Naive thymus-derived CD4-positive, alpha-beta T cell (primary cell): ENCODE measurements at regions of chr14 and their contacts with region 1.

Region 1: DNA sequence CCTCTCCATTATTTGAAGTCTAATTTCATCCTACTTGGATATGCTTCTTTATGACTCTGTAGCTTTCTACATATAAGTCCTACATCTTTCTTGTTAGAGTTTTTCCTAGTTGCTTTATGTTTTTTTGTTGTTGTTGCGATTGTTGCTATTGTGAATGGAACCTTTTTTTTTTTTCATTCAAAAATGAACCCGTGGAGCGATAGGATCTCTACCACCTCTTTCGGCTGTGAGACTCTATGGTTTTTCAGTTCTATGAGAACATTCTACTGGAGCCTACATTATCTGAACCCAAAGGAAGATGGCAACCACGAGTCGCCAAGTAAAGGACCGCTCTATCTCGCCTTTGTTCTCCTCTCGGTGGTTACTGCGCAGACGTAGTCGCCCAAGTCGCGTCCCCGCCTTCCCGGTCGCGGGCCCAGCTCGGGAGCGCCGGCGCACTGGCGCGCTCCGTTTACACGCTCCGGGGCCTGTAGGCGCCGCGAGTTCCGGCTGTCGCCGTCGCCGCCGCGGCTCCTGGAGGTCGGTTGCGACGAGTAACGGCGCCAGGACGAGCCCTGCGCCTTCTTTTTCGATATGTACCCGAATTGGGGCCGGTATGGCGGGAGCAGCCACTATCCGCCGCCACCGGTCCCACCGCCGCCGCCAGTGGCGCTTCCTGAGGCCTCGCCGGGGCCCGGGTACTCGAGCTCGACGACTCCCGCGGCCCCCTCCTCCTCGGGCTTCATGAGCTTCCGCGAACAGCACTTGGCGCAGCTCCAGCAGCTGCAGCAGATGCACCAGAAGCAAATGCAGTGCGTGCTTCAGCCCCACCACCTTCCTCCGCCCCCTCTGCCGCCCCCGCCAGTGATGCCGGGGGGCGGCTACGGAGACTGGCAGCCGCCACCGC is at the start of gene YLPM1:
- DNase-seq: peak; percentile 79 to 97 (median 95)
- ATAC-seq: peak; percentile 98
- H3K4me3 ChIP-seq: peak within 1 kb of the TSS; percentile 58
- H3K4me3 Mint-ChIP-seq: peak within 1 kb of the TSS; percentile 86 to 99 (median 95)
- H3K27ac ChIP-seq: peak within 1 kb of the TSS; percentile 93
- H3K27ac Mint-ChIP-seq: peak within 1 kb of the TSS; percentile 87 to 97 (median 95)
- H3K4me1 ChIP-seq: peaks cover 31 to 38% of the 10 kb centered on the region in 2 donors
- H3K4me1 Mint-ChIP-seq: peaks cover 43 to 56% (median 49%) of the 10 kb centered on the region in 7 donors
- H3K27me3 ChIP-seq: no peaks in the 10 kb centered on the region
- H3K27me3 Mint-ChIP-seq: peaks cover 0 to 2% (median 0%) of the 10 kb centered on the region in 5 donors
- total RNA-seq, gene YLPM1: 84.7 to 119 (median 109) TPM

Region 2: DNA sequence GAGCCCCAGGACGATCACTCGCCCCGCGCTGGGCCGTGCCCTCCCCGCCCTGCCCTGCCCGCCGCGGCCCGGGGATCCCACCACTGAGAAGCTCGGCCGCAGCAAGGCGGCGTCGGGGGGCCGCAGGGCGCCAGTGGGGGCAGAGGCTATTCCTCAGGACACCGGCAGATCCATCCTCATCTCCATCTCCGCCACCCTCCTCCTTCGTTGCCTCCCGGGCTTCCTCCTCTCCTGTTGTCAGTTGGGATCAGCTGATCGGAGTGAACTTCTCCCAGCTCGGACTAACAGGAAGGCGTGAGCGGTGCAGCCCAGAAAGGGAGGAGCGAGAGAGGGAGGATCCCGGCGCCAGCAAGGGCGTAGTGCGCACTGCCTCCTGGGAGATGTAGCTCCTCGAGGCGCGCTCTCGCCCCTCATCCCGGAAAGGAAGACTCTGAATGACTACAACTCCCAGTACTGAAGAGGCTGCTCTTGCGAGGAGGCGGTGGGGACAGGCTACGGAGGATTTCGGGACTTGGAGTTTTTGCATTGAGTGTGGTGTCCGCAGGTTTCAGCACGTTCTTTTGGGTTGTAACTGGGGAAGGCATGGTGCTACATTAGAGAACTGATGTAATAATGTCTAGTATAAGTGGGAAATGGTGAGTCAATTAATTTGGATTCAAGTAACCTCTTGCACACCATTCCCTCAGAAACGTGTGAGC is 1736.2 kb before region 1 on chr14 and contains the start of gene ZFYVE1:
- CTCF ChIA-PET with region 1: no interaction called
- POLR2A ChIA-PET with region 1: no interaction called
- intact Hi-C with region 1: loop called in 1 of 2 experiments (anchors 5 kb)
- DNase-seq: peak; percentile 65 to 91 (median 86)
- ATAC-seq: peak; percentile 100
- H3K4me3 ChIP-seq: peak within 1 kb of the TSS; percentile 74
- H3K4me3 Mint-ChIP-seq: peak within 1 kb of the TSS; percentile 80 to 99 (median 96)
- H3K27ac ChIP-seq: peak within 1 kb of the TSS; percentile 74
- H3K27ac Mint-ChIP-seq: peak within 1 kb of the TSS; percentile 71 to 96 (median 83)
- H3K4me1 ChIP-seq: peaks cover 11 to 12% of the 10 kb centered on the region in 2 donors
- H3K4me1 Mint-ChIP-seq: peaks cover 33 to 50% (median 45%) of the 10 kb centered on the region in 7 donors
- H3K27me3 ChIP-seq: no peaks in the 10 kb centered on the region
- H3K27me3 Mint-ChIP-seq: no peaks in the 10 kb centered on the region
- total RNA-seq, gene ZFYVE1: 15.3 to 24.8 (median 19.1) TPM

Region 3: GRCh38 chr14:74302634-74303577 is 460.3 kb before region 1 on chr14 and contains the start of gene ABCD4:
- CTCF ChIA-PET with region 1: no interaction called
- POLR2A ChIA-PET with region 1: no interaction called
- intact Hi-C with region 1: loop called (anchors 1 kb)
- DNase-seq: peak; percentile 50 to 85 (median 65)
- ATAC-seq: peak; percentile 95
- H3K4me3 ChIP-seq: peak within 1 kb of the TSS; percentile 87
- H3K4me3 Mint-ChIP-seq: peak within 1 kb of the TSS; percentile 90 to 100 (median 96)
- H3K27ac ChIP-seq: peak within 1 kb of the TSS; percentile 77
- H3K27ac Mint-ChIP-seq: peak within 1 kb of the TSS; percentile 81 to 99 (median 96)
- H3K4me1 ChIP-seq: peaks cover 17 to 19% of the 10 kb centered on the region in 2 donors
- H3K4me1 Mint-ChIP-seq: peaks cover 18 to 49% (median 33%) of the 10 kb centered on the region in 7 donors
- H3K27me3 ChIP-seq: no peaks in the 10 kb centered on the region
- H3K27me3 Mint-ChIP-seq: no peaks in the 10 kb centered on the region
- total RNA-seq, gene ABCD4: 57.6 to 109 (median 68.2) TPM

Region 4: GRCh38 chr14:74793506-74794168 is 30.5 kb after region 1 on chr14:
- CTCF ChIA-PET with region 1: interaction called, 8 read pairs
- POLR2A ChIA-PET with region 1: interaction called, 22 read pairs
- intact Hi-C with region 1: loop called (anchors 1 to 2 kb)
- DNase-seq: peak in 7 of 9 donors; percentile 21 to 50 (median 34)
- ATAC-seq: peak; percentile 53
- H3K4me3 ChIP-seq: peak overlapping the region; percentile 25
- H3K4me3 Mint-ChIP-seq: peak overlapping the region; percentile 62 to 89 (median 84)
- H3K27ac ChIP-seq: peak overlapping the region; percentile 60
- H3K27ac Mint-ChIP-seq: peak overlapping the region; percentile 80 to 96 (median 88)
- H3K4me1 ChIP-seq: peaks cover 20% of the 10 kb centered on the region in 2 donors
- H3K4me1 Mint-ChIP-seq: peaks cover 39 to 69% (median 60%) of the 10 kb centered on the region in 7 donors
- H3K27me3 ChIP-seq: no peaks in the 10 kb centered on the region
- H3K27me3 Mint-ChIP-seq: no peaks in the 10 kb centered on the region

Region 5: DNA sequence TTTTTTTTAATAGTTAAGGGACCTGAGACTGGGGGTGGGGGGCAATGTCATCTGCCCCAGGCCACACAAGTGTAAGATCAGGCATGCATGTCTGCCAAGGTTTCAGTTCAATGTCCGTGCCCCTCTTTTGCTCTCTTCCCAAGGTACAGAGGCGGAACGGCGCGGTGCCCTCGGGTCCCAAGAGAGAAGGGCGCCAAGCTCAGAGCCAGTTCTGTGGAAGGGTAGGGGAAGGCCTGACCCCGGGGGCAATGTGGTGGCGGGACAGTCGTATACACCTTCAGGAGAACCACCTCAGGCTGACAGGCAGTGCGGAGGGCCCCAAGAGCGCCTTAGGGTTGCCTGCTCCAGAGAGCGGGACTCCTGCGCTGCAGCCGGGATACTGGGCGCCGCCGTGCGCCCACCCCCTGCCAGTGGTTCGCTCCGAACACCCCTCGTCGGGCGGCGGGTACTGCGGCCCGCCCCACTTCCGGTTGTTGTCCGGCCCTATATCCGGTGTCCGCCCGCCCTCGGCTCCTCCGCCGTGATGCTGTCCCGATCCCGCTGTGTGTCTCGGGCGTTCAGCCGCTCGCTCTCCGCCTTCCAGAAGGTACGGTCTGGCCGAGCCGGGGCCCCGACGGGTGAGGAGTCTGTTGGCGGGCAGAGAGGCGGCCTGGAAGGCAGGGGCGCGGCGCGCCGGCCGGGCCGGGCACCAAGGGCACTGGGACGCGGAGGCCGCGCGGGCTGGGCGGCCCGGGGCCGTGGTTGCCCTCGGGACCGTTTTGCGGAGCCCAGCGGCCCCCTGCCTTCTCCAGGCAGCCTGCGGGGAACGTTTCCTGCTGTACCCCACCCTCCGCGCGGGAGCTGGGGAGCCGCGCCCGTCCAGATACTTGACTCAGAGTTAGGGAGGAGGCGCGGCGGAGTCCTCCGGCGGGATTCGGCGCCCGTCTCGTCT is 118.5 kb after region 1 on chr14 and contains the start of gene DLST:
- CTCF ChIA-PET with region 1: no interaction called
- POLR2A ChIA-PET with region 1: interaction called, 3 read pairs
- intact Hi-C with region 1: loop called in 1 of 2 experiments (anchors 1 kb)
- DNase-seq: peak; percentile 74 to 94 (median 81)
- ATAC-seq: peak; percentile 91
- H3K4me3 ChIP-seq: peak within 1 kb of the TSS; percentile 77
- H3K4me3 Mint-ChIP-seq: peak within 1 kb of the TSS; percentile 94 to 100 (median 98)
- H3K27ac ChIP-seq: peak within 1 kb of the TSS; percentile 91
- H3K27ac Mint-ChIP-seq: peak within 1 kb of the TSS; percentile 96 to 100 (median 99)
- H3K4me1 ChIP-seq: peaks cover 30 to 34% of the 10 kb centered on the region in 2 donors
- H3K4me1 Mint-ChIP-seq: peaks cover 49 to 82% (median 72%) of the 10 kb centered on the region in 7 donors
- H3K27me3 ChIP-seq: no peaks in the 10 kb centered on the region
- H3K27me3 Mint-ChIP-seq: no peaks in the 10 kb centered on the region
- total RNA-seq, gene DLST: 90.0 to 132 (median 96.5) TPM